MCF 10A (cell line): ENCODE measurements at regions of chr20 and their contacts with region 1.

Region 1: GRCh38 chr20:7859356-7859802 is 80.9 kb downstream of the HAO1 start:
- DNase-seq: peak; percentile 79
- H3K4me3 Mint-ChIP-seq: no peak overlapping the region
- H3K27ac Mint-ChIP-seq: peak overlapping the region; percentile 23
- H3K4me1 Mint-ChIP-seq: peaks cover 33% of the 10 kb centered on the region
- H3K27me3 Mint-ChIP-seq: no peaks in the 10 kb centered on the region
- CTCF ChIP-seq: peak; percentile 50

Region 2: GRCh38 chr20:6636209-6637159 is 1222.9 kb before region 1 on chr20:
- CTCF ChIA-PET with region 1: interaction called, 3 read pairs
- POLR2A ChIA-PET with region 1: no interaction called
- intact Hi-C with region 1: loop called (anchors 1 kb)
- DNase-seq: peak; percentile 80
- H3K4me3 Mint-ChIP-seq: no peak overlapping the region
- H3K27ac Mint-ChIP-seq: no peak overlapping the region
- H3K4me1 Mint-ChIP-seq: peaks cover 17% of the 10 kb centered on the region
- H3K27me3 Mint-ChIP-seq: no peaks in the 10 kb centered on the region
- CTCF ChIP-seq: peak; percentile 55

Region 3: GRCh38 chr20:7113577-7114466 is 745.6 kb before region 1 on chr20:
- CTCF ChIA-PET with region 1: interaction called, 31 read pairs
- POLR2A ChIA-PET with region 1: no interaction called
- intact Hi-C with region 1: loop called (anchors 5 kb)
- DNase-seq: peak; percentile 70
- H3K4me3 Mint-ChIP-seq: no peak overlapping the region
- H3K27ac Mint-ChIP-seq: no peak overlapping the region
- H3K4me1 Mint-ChIP-seq: peaks cover 8% of the 10 kb centered on the region
- H3K27me3 Mint-ChIP-seq: no peaks in the 10 kb centered on the region
- CTCF ChIP-seq: peak; percentile 67

Region 4: GRCh38 chr20:7375905-7376304 is 483.5 kb before region 1 on chr20:
- CTCF ChIA-PET with region 1: interaction called, 9 read pairs
- POLR2A ChIA-PET with region 1: interaction called, 3 read pairs
- intact Hi-C with region 1: loop called (anchors 2 kb)
- DNase-seq: peak; percentile 53
- H3K4me3 Mint-ChIP-seq: no peak overlapping the region
- H3K27ac Mint-ChIP-seq: no peak overlapping the region
- H3K4me1 Mint-ChIP-seq: no peaks in the 10 kb centered on the region
- H3K27me3 Mint-ChIP-seq: no peaks in the 10 kb centered on the region
- CTCF ChIP-seq: peak; percentile 35

Region 5: DNA sequence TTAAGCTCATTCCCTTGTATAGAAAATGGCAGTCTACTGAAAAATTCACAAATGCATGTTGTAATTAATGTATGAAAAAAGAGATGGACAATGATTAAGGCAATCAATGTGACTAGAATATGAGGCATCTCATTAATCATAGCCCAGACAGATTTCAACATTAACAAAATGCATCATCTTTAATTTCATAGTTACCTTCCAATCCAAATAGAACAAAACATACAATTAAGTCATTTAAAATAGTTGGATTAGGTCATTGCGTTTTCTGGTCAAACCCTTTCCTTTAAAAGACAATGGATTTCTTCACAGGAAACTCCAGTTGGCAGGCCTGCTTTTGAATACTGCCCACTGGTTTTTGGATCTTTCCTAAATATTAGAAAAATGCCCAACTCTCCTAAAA is 123.0 kb before region 1 on chr20:
- CTCF ChIA-PET with region 1: no interaction called
- POLR2A ChIA-PET with region 1: interaction called, 3 read pairs
- intact Hi-C with region 1: loop called (anchors 10 kb)
- DNase-seq: peak; percentile 66
- H3K4me3 Mint-ChIP-seq: no peak overlapping the region
- H3K27ac Mint-ChIP-seq: no peak overlapping the region
- H3K4me1 Mint-ChIP-seq: no peaks in the 10 kb centered on the region
- H3K27me3 Mint-ChIP-seq: no peaks in the 10 kb centered on the region
- CTCF ChIP-seq: no peak